ENCODE measurements at regions of chr6 and their contacts with region 1.

Region 1: GRCh38 chr6:20455251-20455940 is 53.7 kb downstream of the E2F3 start:
- DNase-seq: no peak
- ATAC-seq: no peak; the same call in 2 of the 3 replicates
- H3K4me3 ChIP-seq: no peak overlapping the region
- H3K27ac ChIP-seq: peak overlapping the region; percentile 67
- H3K4me1 ChIP-seq: peaks cover 34 to 68% of the 10 kb centered on the region in 2 experiments
- H3K27me3 ChIP-seq: no peaks in the 10 kb centered on the region
- CTCF ChIP-seq: no peak
- EP300 ChIP-seq: no peak; the same call in 1 of the 2 replicates
- POLR2A ChIP-seq: no peak
- RAD21 ChIP-seq: no peak

Region 2: GRCh38 chr6:20444786-20445271 is 10.6 kb before region 1 on chr6:
- CTCF ChIA-PET with region 1: no interaction called
- POLR2A ChIA-PET with region 1: interaction called, 17 read pairs
- in situ Hi-C with region 1: no loop called
- intact Hi-C with region 1: no loop called
- DNase-seq: peak; percentile 60 to 94 (median 74)
- ATAC-seq: peak; percentile 89
- H3K4me3 ChIP-seq: no peak overlapping the region
- H3K27ac ChIP-seq: peak overlapping the region; percentile 70
- H3K4me1 ChIP-seq: peaks cover 21 to 48% of the 10 kb centered on the region in 2 experiments; a peak in 4 of 5 replicates
- H3K27me3 ChIP-seq: no peaks in the 10 kb centered on the region
- CTCF ChIP-seq: no peak
- EP300 ChIP-seq: peak; percentile 87; the same call in 1 of the 2 replicates
- POLR2A ChIP-seq: no peak
- RAD21 ChIP-seq: no peak

Region 3: DNA sequence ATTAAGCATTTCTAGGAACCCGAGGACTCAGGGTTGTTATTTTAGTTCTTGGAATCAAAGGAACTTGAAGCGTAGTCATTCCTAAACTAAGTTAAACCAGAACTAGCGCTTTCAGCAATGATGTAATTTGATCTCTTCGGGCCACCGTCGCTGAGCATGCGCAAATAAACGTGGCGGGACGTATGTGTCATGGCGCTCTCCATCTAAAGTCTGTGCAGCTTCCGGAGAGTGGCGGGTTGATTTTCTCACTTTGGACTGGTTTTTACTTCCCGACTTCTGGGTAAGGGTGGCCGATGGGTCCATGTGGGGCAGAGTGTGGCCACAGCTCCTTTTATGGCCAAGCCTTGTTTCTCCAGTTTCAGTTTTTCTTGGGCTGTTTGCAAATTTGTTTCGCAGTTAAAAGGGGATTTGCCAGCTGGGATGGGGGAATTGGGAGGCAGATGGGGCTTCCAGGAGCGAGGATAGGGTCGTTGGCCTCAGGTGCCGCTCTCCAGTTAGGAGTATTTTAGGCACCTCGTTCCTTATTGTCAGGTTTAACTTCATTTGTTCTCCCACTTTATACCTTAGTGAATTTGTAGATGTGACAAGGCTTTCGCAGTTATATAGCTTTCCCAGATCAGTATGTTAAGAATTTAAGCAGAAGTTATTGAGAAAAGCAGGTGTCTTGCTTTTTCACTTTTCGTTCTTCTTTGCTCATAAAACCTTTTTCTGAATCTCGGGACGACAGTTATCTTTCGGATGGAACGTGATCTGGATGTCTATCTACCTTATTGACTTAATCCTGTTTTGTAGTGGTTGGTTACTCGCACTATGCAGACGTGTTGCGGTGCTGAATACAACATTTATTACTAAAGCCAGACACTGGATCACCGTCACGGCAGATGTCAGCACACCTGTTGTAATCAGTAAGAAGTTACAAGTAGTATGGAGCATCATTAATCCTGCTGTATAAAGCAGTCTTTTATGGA is 79.2 kb after region 1 on chr6 and contains the start of gene CDKAL1:
- CTCF ChIA-PET with region 1: no interaction called
- POLR2A ChIA-PET with region 1: interaction called, 4 read pairs
- in situ Hi-C with region 1: no loop called
- intact Hi-C with region 1: loop called (anchors 2 kb)
- DNase-seq: peak; percentile 81 to 98 (median 86)
- ATAC-seq: peak; percentile 91
- H3K4me3 ChIP-seq: peak within 1 kb of the TSS; percentile 88
- H3K27ac ChIP-seq: peak within 1 kb of the TSS; percentile 93
- H3K4me1 ChIP-seq: peaks cover 7 to 16% of the 10 kb centered on the region in 2 experiments; a peak in 3 of 5 replicates
- H3K27me3 ChIP-seq: no peaks in the 10 kb centered on the region
- CTCF ChIP-seq: no peak
- EP300 ChIP-seq: peak; percentile 46; the same call in 1 of the 2 replicates
- POLR2A ChIP-seq: peak; percentile 93
- RAD21 ChIP-seq: no peak
- polyA plus RNA-seq, gene CDKAL1: 15.5 to 16.4 TPM

Measured in K562 (cell line).